ENCODE measurements at regions of chr12 and their contacts with region 1.

Region 1: DNA sequence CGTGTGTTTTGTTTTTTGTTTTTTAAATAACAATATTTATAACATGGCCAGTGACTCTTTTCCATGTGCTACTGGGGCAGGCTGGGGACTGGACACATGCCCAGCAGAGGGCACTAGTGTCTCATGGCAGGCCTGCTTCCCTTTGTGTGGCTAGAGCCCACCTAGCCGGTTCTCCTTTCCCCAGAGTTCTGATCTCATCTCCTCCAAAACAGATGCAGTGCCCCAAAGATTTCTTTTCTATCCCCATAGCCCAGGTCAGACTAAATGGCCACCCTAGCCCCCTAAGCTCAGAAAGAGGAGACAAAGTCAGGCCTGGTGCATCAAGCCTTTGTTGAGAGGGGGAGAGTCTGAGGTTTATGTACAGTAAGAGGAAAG is 21.2 kb downstream of the PRPF40B start:
- DNase-seq: peak; percentile 76 to 89 (median 77)
- H3K4me3 ChIP-seq: no peak overlapping the region
- H3K4me3 Mint-ChIP-seq: peak overlapping the region in 2 of 7 donors; percentile 20 to 23
- H3K27ac ChIP-seq: no peak overlapping the region
- H3K27ac Mint-ChIP-seq: peak overlapping the region; percentile 44 to 98 (median 89)
- H3K4me1 ChIP-seq: peaks cover 17% of the 10 kb centered on the region
- H3K4me1 Mint-ChIP-seq: peaks cover 18 to 31% (median 23%) of the 10 kb centered on the region in 3 donors
- H3K27me3 ChIP-seq: no peaks in the 10 kb centered on the region
- H3K27me3 Mint-ChIP-seq: no peaks in the 10 kb centered on the region

Region 2: DNA sequence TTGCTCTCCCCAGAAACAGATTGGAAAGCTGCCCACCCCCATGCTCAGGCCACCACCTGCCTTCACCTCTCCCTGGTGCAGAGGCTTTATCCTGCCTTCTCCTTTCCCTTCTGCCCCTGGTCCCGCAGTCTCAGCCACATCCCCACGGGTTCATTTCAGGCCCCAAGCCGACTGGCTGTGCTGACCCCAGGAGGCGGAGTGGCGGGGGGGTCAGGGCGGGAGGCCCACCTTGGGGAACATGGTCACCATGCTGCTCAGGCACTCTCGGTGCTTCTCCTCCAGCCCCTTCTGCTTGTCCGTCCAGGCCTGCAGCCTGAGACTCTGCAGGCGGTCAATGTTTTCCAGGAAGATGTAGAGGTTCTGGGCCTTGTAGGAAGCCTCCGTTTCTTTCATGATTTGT is 46.1 kb before region 1 on chr12:
- CTCF ChIA-PET with region 1: no interaction called
- POLR2A ChIA-PET with region 1: no interaction called
- DNase-seq: no peak
- H3K4me3 ChIP-seq: no peak overlapping the region
- H3K4me3 Mint-ChIP-seq: no peak overlapping the region
- H3K27ac ChIP-seq: no peak overlapping the region
- H3K27ac Mint-ChIP-seq: peak overlapping the region in 2 of 8 donors; percentile 56 to 75
- H3K4me1 ChIP-seq: no peaks in the 10 kb centered on the region
- H3K4me1 Mint-ChIP-seq: no peaks in the 10 kb centered on the region
- H3K27me3 ChIP-seq: no peaks in the 10 kb centered on the region
- H3K27me3 Mint-ChIP-seq: no peaks in the 10 kb centered on the region

Region 3: DNA sequence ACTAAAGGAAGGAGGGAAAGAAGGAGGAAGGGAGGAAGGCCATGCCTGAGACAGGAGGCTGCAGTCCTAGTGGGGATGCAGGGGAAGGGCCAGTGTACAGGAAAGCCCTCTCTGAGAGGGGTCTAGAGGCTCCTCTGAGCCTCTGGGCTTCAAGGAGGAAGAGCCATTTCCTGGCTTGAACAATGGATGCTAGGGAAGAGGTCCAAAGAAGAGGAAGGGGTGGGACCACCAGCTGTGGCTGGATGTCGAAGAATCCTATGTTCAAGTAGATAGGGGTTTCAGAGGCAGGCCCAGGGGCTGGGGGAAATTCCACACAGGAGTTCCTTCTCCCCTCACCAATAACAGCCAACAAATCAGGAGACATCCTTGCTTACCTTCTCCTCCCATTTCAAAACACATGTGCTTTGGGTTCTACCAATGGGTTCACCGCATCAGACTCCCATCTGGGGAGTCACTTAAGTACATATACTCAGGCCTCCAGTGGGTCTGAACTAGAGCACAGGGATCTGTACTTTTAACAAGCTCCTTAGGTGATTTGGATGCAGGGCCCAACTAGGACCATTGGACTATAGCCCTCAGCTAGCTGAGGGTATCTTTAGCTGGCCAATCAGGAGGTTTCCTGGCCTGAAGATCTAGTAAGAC is 11.1 kb after region 1 on chr12:
- CTCF ChIA-PET with region 1: interaction called, 24 read pairs
- POLR2A ChIA-PET with region 1: interaction called, 4 read pairs
- DNase-seq: no peak
- H3K4me3 ChIP-seq: no peak overlapping the region
- H3K4me3 Mint-ChIP-seq: no peak overlapping the region
- H3K27ac ChIP-seq: no peak overlapping the region
- H3K27ac Mint-ChIP-seq: peak overlapping the region in 7 of 8 donors; percentile 28 to 92 (median 54)
- H3K4me1 ChIP-seq: peaks cover 25% of the 10 kb centered on the region
- H3K4me1 Mint-ChIP-seq: peaks cover 11 to 26% (median 21%) of the 10 kb centered on the region in 3 donors
- H3K27me3 ChIP-seq: no peaks in the 10 kb centered on the region
- H3K27me3 Mint-ChIP-seq: no peaks in the 10 kb centered on the region

Region 4: GRCh38 chr12:49673446-49674317 is 29.1 kb after region 1 on chr12:
- CTCF ChIA-PET with region 1: interaction called, 21 read pairs
- POLR2A ChIA-PET with region 1: interaction called, 7 read pairs
- DNase-seq: no peak
- H3K4me3 ChIP-seq: no peak overlapping the region
- H3K4me3 Mint-ChIP-seq: peak overlapping the region in 4 of 7 donors; percentile 18 to 54 (median 44)
- H3K27ac ChIP-seq: peak overlapping the region; percentile 64
- H3K27ac Mint-ChIP-seq: peak overlapping the region; percentile 90 to 99 (median 98)
- H3K4me1 ChIP-seq: peaks cover 83% of the 10 kb centered on the region
- H3K4me1 Mint-ChIP-seq: peaks cover 72 to 85% (median 84%) of the 10 kb centered on the region in 3 donors
- H3K27me3 ChIP-seq: no peaks in the 10 kb centered on the region
- H3K27me3 Mint-ChIP-seq: no peaks in the 10 kb centered on the region

Region 5: GRCh38 chr12:49707128-49707811 is 62.7 kb after region 1 on chr12 and contains the start of gene FMNL3:
- CTCF ChIA-PET with region 1: interaction called, 248 read pairs
- POLR2A ChIA-PET with region 1: interaction called, 15 read pairs
- DNase-seq: peak; percentile 97 to 99 (median 99)
- H3K4me3 ChIP-seq: peak within 1 kb of the TSS; percentile 72
- H3K4me3 Mint-ChIP-seq: peak within 1 kb of the TSS; percentile 87 to 96 (median 91)
- H3K27ac ChIP-seq: peak within 1 kb of the TSS; percentile 76
- H3K27ac Mint-ChIP-seq: peak within 1 kb of the TSS; percentile 33 to 95 (median 90)
- H3K4me1 ChIP-seq: peaks cover 39% of the 10 kb centered on the region
- H3K4me1 Mint-ChIP-seq: peaks cover 39 to 45% (median 44%) of the 10 kb centered on the region in 3 donors
- H3K27me3 ChIP-seq: no peaks in the 10 kb centered on the region
- H3K27me3 Mint-ChIP-seq: peaks cover 5 to 6% of the 10 kb centered on the region in 2 donors
- total RNA-seq, gene FMNL3: 35.8 to 36.7 TPM

Region 6: GRCh38 chr12:49776413-49776812 is 131.8 kb after region 1 on chr12:
- CTCF ChIA-PET with region 1: interaction called, 12 read pairs
- POLR2A ChIA-PET with region 1: no interaction called
- DNase-seq: peak in 4 of 5 donors; percentile 8 to 66 (median 38)
- H3K4me3 ChIP-seq: no peak overlapping the region
- H3K4me3 Mint-ChIP-seq: no peak overlapping the region
- H3K27ac ChIP-seq: no peak overlapping the region
- H3K27ac Mint-ChIP-seq: no peak overlapping the region
- H3K4me1 ChIP-seq: peaks cover 15% of the 10 kb centered on the region
- H3K4me1 Mint-ChIP-seq: peaks cover 12 to 19% (median 13%) of the 10 kb centered on the region in 3 donors
- H3K27me3 ChIP-seq: peaks cover 4% of the 10 kb centered on the region
- H3K27me3 Mint-ChIP-seq: peaks cover 24 to 27% of the 10 kb centered on the region in 2 donors